ENCODE measurements at regions of chr1 and their contacts with region 1.

Region 1: GRCh38 chr1:159197561-159198557 is 6.8 kb upstream of the ACKR1 start:
- DNase-seq: peak; percentile 28
- H3K4me3 Mint-ChIP-seq: no peak overlapping the region
- H3K27ac Mint-ChIP-seq: no peak overlapping the region
- H3K4me1 Mint-ChIP-seq: no peaks in the 10 kb centered on the region
- H3K27me3 Mint-ChIP-seq: peaks cover 24% of the 10 kb centered on the region

Region 2: DNA sequence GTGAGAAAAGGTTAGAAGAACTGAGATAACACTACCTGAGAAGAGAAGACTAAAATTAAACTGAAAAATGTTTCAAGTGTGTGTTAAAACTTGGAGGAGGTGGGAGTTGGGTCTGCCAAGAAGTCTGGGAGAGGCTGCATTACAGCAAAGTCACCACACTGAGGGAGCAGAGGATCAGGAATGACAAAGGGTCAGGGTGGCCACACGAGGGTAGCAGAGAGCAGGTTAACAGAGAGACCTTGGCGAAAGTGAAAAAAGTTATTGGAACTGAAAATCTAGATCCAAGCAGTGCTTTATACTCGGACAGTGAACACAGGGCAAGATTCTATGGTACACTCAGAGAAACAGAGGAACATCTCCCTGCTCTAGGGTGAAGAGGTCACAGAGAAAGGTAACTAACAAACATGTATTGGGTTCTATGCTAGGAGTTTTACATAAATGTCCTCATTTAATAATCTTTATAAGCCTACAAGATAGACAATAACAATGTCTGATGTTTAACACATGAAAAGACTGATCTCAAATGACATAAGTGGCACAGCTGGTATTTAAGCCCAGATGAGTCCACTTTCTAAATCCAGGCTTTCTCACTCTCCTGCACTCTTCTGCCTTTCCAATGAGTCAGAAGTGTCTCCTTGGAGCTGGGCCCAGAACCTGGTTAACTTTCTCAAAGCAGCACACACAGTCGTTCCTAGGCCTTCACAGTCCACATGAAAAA is 36.7 kb before region 1 on chr1:
- intact Hi-C with region 1: loop called (anchors 5 kb)
- DNase-seq: peak; percentile 45
- H3K4me3 Mint-ChIP-seq: no peak overlapping the region
- H3K27ac Mint-ChIP-seq: no peak overlapping the region
- H3K4me1 Mint-ChIP-seq: peaks cover 2% of the 10 kb centered on the region
- H3K27me3 Mint-ChIP-seq: peaks cover 24% of the 10 kb centered on the region

Region 3: GRCh38 chr1:159239551-159240220 is 41.8 kb after region 1 on chr1:
- intact Hi-C with region 1: no loop called
- DNase-seq: no peak
- H3K4me3 Mint-ChIP-seq: no peak overlapping the region
- H3K27ac Mint-ChIP-seq: no peak overlapping the region
- H3K4me1 Mint-ChIP-seq: no peaks in the 10 kb centered on the region
- H3K27me3 Mint-ChIP-seq: no peaks in the 10 kb centered on the region

Measured in activated T-helper 2 cell treated with anti-CD3 and anti-CD28 coated beads, Interferon-gamma antibody, Interleukin-2, Interleukin-4, amounts not matched to agents 10 μg/mL and 5 μg/mL and 100 μg/mL, durations not matched to agents 14 hours and 24 hours and 36 hours (primary cell).